Activated B cell treated with CpG ODN at 0.5 μM for 24 hours (primary cell): ENCODE measurements at regions of chr6 and their contacts with region 1.

Region 1: DNA sequence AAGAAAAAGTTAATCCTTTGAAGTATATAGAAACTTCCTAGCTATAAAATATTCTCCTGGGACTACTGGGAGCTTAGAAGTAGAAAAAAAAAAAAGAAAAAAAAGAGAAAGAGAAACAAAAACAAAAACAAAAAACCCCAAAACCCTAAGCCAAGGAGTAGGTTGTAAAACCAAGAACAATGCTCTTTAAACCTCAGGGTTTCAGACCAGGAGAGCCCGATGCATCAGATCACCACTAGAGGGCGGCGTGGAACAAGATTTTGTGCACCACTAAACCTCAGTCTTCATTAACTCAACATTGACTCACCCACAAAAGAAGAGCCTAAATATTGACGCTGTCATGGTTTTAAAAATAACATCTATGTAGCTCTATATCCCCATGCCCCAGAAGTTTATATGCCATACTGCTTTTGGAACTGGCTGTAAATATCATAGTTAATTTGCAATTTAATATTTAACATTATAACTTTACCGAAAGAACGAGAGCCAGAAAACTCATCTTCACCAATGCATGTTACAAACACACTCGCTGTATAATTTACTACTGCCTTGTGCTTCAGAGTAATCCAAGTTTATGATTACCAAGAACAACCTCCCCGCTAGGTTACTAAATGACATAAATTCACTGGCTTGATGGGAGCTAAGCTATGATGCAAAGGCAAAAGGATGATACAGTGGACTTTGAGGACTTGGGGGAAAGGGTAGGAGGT is 19.2 kb downstream of the MCUR1 start:
- DNase-seq: peak; percentile 57
- ATAC-seq: peak; percentile 98
- H3K4me3 Mint-ChIP-seq: no peak overlapping the region
- H3K27ac Mint-ChIP-seq: no peak overlapping the region
- H3K4me1 Mint-ChIP-seq: peaks cover 7% of the 10 kb centered on the region
- H3K27me3 Mint-ChIP-seq: no peaks in the 10 kb centered on the region
- CTCF ChIP-seq: peak; percentile 68

Region 2: DNA sequence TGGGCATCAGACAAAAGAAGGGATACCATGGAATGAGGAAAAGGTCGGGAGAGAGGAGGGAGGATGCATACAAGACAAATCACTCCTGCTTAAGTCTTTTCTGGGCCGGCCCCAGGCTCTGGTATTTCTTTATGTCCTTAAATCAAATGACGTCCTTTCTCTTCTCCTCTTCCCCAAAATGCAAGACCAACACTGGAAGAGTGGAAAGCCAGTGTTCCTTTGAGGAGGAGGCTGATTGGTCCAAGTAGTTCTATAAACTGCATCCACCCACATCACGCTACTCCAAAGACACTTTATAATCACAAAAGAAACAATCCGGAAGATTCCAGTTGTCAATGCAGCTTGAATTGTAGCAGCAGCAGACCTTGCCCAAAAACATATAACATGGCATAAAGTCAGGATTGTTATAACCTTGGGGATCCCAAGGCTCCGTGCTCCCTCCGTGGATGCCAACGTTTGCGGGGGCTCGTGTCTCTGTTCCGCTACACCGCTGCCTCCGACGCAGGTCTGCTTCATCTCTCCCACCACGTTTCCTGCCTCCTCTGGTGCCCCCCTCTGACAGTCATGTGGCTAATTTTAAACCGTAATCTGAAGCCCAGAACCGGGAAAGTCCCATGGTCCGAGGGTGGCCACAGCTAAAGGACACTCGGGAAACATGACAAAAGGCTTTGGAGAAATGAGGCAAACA is 27.9 kb before region 1 on chr6:
- CTCF ChIA-PET with region 1: interaction called, 3 read pairs
- POLR2A ChIA-PET with region 1: no interaction called
- intact Hi-C with region 1: loop called (anchors 1 kb)
- DNase-seq: no peak
- ATAC-seq: peak; percentile 49
- H3K4me3 Mint-ChIP-seq: peak overlapping the region; percentile 81
- H3K27ac Mint-ChIP-seq: no peak overlapping the region
- H3K4me1 Mint-ChIP-seq: peaks cover 45% of the 10 kb centered on the region
- H3K27me3 Mint-ChIP-seq: no peaks in the 10 kb centered on the region
- CTCF ChIP-seq: no peak

Region 3: DNA sequence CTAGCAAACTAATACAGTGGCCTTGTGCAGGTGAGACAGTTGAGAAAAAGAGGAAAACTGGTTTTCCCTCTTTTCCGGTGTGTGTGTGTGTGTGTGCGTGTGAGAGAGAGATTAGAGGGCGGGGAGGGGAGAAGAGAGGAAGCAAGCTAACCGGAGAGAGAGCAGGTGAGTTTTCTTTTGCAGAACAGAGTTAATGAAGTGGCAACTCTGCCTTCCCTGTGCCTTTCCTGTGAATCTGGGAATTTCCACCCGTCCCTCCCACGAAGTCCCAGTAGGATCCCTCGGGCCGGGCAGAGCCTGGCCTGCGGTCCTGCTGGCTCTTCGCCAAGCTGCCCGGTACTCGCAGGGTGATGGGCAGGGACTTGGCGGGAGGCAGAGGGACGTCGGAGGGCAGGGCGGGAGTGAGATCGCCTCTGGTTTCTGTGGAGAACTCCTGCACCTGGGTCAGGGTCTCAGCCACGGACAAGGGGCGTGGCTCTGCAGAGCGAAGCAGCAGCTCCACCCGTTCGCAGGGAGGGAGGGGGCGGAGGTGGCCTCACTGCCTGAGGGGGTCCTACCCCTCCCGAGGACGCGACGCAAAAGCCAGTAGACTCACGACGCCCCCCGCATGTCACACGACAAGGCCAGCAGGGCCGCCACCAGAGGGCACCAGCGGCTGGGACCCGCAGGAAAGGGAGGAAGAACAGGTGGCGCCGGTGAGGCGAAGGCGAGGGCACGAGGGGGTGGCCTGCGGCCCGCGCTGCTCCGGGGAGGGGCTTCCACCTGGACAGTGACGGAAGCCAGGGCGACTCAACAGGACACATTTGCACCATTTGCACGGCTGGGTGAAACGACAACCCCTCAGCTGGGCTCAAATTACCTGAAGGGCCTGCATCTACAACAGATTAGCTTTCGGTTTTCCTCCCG is 78.3 kb after region 1 on chr6:
- CTCF ChIA-PET with region 1: interaction called, 3 read pairs
- POLR2A ChIA-PET with region 1: no interaction called
- intact Hi-C with region 1: loop called (anchors 1 kb)
- DNase-seq: peak; percentile 74
- ATAC-seq: peak; percentile 87
- H3K4me3 Mint-ChIP-seq: peak overlapping the region; percentile 77
- H3K27ac Mint-ChIP-seq: no peak overlapping the region
- H3K4me1 Mint-ChIP-seq: peaks cover 20% of the 10 kb centered on the region
- H3K27me3 Mint-ChIP-seq: peaks cover 2% of the 10 kb centered on the region
- CTCF ChIP-seq: peak; percentile 80

Region 4: DNA sequence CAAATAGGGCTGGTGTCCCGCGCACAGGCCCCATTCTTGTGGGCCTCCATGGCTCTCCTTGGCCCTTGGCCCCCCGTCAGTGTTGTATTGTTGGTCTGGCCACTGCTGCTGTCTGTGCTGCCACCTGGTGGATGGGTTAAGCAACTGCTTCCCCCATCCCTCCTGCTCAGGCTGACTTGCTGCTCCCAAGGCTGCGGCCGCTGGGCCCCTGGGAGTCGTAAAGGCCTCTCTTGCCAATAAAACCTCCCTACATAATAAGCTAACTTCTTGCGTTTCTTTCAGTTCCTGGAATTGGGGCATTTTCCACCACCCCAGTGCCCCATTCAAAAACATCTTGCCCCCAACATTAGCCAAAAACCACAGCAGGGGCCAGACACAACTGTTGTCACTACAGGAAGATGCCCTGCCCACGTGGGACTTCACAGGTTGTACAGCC is 349.5 kb after region 1 on chr6:
- CTCF ChIA-PET with region 1: interaction called, 3 read pairs
- POLR2A ChIA-PET with region 1: interaction called, 3 read pairs
- intact Hi-C with region 1: loop called (anchors 1 kb)
- DNase-seq: peak; percentile 63
- ATAC-seq: peak; percentile 84
- H3K4me3 Mint-ChIP-seq: peak overlapping the region; percentile 20
- H3K27ac Mint-ChIP-seq: peak overlapping the region; percentile 62
- H3K4me1 Mint-ChIP-seq: peaks cover 42% of the 10 kb centered on the region
- H3K27me3 Mint-ChIP-seq: no peaks in the 10 kb centered on the region
- CTCF ChIP-seq: peak; percentile 57

Region 5: GRCh38 chr6:15491255-15491985 is 1696.2 kb after region 1 on chr6:
- CTCF ChIA-PET with region 1: no interaction called
- POLR2A ChIA-PET with region 1: no interaction called
- intact Hi-C with region 1: loop called (anchors 10 kb)
- DNase-seq: peak; percentile 35
- ATAC-seq: peak; percentile 82
- H3K4me3 Mint-ChIP-seq: no peak overlapping the region
- H3K27ac Mint-ChIP-seq: no peak overlapping the region
- H3K4me1 Mint-ChIP-seq: peaks cover 32% of the 10 kb centered on the region
- H3K27me3 Mint-ChIP-seq: no peaks in the 10 kb centered on the region
- CTCF ChIP-seq: peak; percentile 95